ENCODE measurements at regions of chr11 and their contacts with region 1.

Region 1: GRCh38 chr11:100575870-100576705 is 111.0 kb upstream of the ARHGAP42 start:
- DNase-seq: peak; percentile 60
- H3K4me3 Mint-ChIP-seq: no peak overlapping the region
- H3K27ac Mint-ChIP-seq: no peak overlapping the region
- H3K4me1 Mint-ChIP-seq: no peaks in the 10 kb centered on the region
- H3K27me3 Mint-ChIP-seq: no peaks in the 10 kb centered on the region

Region 2: DNA sequence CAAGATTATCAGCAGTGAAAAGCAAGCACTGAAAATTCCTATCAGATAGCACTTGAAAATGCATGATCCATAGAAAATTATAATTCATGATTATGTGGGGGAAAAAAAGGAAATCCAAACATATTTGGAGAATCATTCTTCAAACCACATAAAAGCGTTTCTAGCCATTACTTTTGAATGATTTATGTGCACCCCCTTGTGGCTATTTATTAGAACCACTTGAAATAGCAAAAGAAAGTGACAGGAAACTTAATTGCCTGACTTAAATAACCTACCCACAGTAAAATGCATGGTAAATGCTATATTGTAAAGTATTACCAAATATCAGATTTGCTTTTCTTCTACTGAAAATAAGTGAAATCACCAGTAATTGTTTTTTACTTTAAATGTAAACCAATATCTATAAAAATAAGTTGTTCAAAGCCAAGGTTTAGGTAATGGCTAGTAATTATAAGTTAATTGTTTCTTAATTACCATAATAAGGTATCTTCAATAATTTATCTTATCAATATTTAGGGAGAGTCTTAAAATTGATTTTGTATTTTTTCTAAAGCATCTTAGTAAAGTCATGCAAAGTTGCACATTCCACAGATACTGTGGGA is 279.5 kb after region 1 on chr11:
- intact Hi-C with region 1: loop called (anchors 5 kb)
- DNase-seq: no peak
- H3K4me3 Mint-ChIP-seq: no peak overlapping the region
- H3K27ac Mint-ChIP-seq: no peak overlapping the region
- H3K4me1 Mint-ChIP-seq: no peaks in the 10 kb centered on the region
- H3K27me3 Mint-ChIP-seq: no peaks in the 10 kb centered on the region

Measured in activated CD4-positive, alpha-beta T cell treated with anti-CD3 and anti-CD28 coated beads, Interleukin-2, amount 10 ng/mL, durations not matched to agents 24 days and 14 days (primary cell).